Caco-2 (cell line): ENCODE measurements at regions of chr2 and their contacts with region 1.

Region 1: GRCh38 chr2:128232965-128233789 is 85.5 kb downstream of the HS6ST1 start:
- DNase-seq: peak; percentile 88 to 93
- H3K4me3 ChIP-seq: peak overlapping the region; percentile 71
- H3K4me3 Mint-ChIP-seq: peak overlapping the region; percentile 73
- H3K27ac Mint-ChIP-seq: no peak overlapping the region
- H3K4me1 ChIP-seq: no peaks in the 10 kb centered on the region
- H3K4me1 Mint-ChIP-seq: no peaks in the 10 kb centered on the region
- H3K27me3 ChIP-seq: no peaks in the 10 kb centered on the region
- H3K27me3 Mint-ChIP-seq: no peaks in the 10 kb centered on the region
- CTCF ChIP-seq: peak; percentile 88 to 96

Region 2: GRCh38 chr2:127763776-127764175 is 469.4 kb before region 1 on chr2:
- CTCF ChIA-PET with region 1: no interaction called
- POLR2A ChIA-PET with region 1: no interaction called
- intact Hi-C with region 1: no loop called
- DNase-seq: no peak
- H3K4me3 ChIP-seq: no peak overlapping the region
- H3K4me3 Mint-ChIP-seq: no peak overlapping the region
- H3K27ac Mint-ChIP-seq: no peak overlapping the region
- H3K4me1 ChIP-seq: no peaks in the 10 kb centered on the region
- H3K4me1 Mint-ChIP-seq: no peaks in the 10 kb centered on the region
- H3K27me3 ChIP-seq: no peaks in the 10 kb centered on the region
- H3K27me3 Mint-ChIP-seq: no peaks in the 10 kb centered on the region
- CTCF ChIP-seq: no peak

Region 3: GRCh38 chr2:128062571-128062970 is 170.6 kb before region 1 on chr2:
- CTCF ChIA-PET with region 1: interaction called, 5 read pairs
- POLR2A ChIA-PET with region 1: no interaction called
- intact Hi-C with region 1: loop called (anchors 1 kb)
- DNase-seq: no peak
- H3K4me3 ChIP-seq: no peak overlapping the region
- H3K4me3 Mint-ChIP-seq: no peak overlapping the region
- H3K27ac Mint-ChIP-seq: no peak overlapping the region
- H3K4me1 ChIP-seq: peaks cover 4% of the 10 kb centered on the region
- H3K4me1 Mint-ChIP-seq: peaks cover 9% of the 10 kb centered on the region
- H3K27me3 ChIP-seq: no peaks in the 10 kb centered on the region
- H3K27me3 Mint-ChIP-seq: no peaks in the 10 kb centered on the region
- CTCF ChIP-seq: no peak

Region 4: DNA sequence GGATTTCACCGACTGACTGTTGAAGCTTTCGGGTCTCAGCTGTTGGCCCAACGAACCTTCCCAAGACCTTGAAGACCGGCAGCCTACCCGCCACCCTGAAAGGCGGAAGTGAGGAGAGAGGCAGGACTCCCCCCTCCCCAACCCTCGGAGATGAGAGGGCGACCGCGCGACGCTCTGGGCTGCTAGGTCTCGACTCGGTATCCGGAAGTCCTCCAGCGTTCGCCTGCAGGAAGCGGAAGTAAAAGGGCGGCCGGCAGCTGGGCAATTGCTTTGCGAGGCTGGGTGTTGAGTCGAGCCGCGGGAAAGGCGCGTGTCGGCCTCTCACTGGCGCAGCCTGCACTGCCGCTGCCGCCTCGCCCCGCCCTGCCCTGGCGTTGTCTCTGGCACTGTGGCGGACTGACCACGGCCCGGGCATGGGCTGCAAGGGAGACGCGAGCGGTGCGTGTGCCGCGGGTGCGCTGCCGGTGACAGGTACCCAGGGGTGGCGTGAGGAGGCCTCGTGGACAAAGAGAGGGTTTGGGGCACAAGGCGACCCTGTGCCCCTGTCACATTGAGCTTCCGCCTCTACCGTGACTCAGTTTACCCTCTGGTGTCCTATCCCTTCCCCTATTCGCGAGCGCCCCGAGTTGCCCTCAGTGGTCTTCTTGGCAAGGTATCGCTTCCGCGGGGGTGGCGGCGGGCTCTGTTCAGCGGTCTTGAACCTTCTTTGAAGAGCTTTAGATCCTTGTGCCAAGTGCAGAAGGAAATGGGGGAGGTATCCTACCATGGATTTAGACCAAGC is 142.0 kb before region 1 on chr2 and contains the start of gene UGGT1:
- CTCF ChIA-PET with region 1: interaction called, 4 read pairs
- POLR2A ChIA-PET with region 1: no interaction called
- intact Hi-C with region 1: loop called (anchors 10 kb)
- DNase-seq: peak; percentile 96 to 97
- H3K4me3 ChIP-seq: peak within 1 kb of the TSS; percentile 64
- H3K4me3 Mint-ChIP-seq: peak within 1 kb of the TSS; percentile 84
- H3K27ac Mint-ChIP-seq: peak within 1 kb of the TSS; percentile 91
- H3K4me1 ChIP-seq: no peaks in the 10 kb centered on the region
- H3K4me1 Mint-ChIP-seq: no peaks in the 10 kb centered on the region
- H3K27me3 ChIP-seq: no peaks in the 10 kb centered on the region
- H3K27me3 Mint-ChIP-seq: no peaks in the 10 kb centered on the region
- CTCF ChIP-seq: no peak
- total RNA-seq, gene UGGT1: 77.5 and 80.0 TPM in 2 replicates

Region 5: DNA sequence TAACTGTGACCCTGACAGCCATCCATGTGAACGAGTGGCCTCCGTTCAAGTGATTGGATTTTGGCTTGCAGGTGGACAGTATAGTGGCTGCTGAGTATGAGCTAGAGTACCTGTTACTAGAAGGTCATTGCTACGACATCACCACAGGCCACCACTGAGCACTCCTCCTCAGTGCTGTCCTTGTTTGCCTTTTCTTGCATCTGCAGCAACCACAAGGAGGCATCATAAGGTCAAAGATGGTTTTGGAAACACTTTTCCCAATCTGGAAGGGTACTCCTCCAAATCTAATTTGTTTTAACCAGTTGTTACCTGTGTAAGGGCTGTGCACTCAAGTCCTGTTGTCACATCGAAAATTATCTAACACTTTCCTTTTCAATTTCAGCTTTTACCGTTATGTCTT is 61.0 kb before region 1 on chr2:
- CTCF ChIA-PET with region 1: no interaction called
- POLR2A ChIA-PET with region 1: interaction called, 8 read pairs
- intact Hi-C with region 1: loop called (anchors 1 kb)
- DNase-seq: peak in 1 of 2 experiments; percentile 20
- H3K4me3 ChIP-seq: no peak overlapping the region
- H3K4me3 Mint-ChIP-seq: no peak overlapping the region
- H3K27ac Mint-ChIP-seq: no peak overlapping the region
- H3K4me1 ChIP-seq: peaks cover 16% of the 10 kb centered on the region
- H3K4me1 Mint-ChIP-seq: peaks cover 14% of the 10 kb centered on the region
- H3K27me3 ChIP-seq: no peaks in the 10 kb centered on the region
- H3K27me3 Mint-ChIP-seq: no peaks in the 10 kb centered on the region
- CTCF ChIP-seq: peak; percentile 24 to 47

Region 6: GRCh38 chr2:128178650-128179460 is 54.3 kb before region 1 on chr2:
- CTCF ChIA-PET with region 1: interaction called, 7 read pairs
- POLR2A ChIA-PET with region 1: no interaction called
- intact Hi-C with region 1: loop called (anchors 1 kb)
- DNase-seq: peak; percentile 46 to 60
- H3K4me3 ChIP-seq: no peak overlapping the region
- H3K4me3 Mint-ChIP-seq: no peak overlapping the region
- H3K27ac Mint-ChIP-seq: no peak overlapping the region
- H3K4me1 ChIP-seq: no peaks in the 10 kb centered on the region
- H3K4me1 Mint-ChIP-seq: no peaks in the 10 kb centered on the region
- H3K27me3 ChIP-seq: no peaks in the 10 kb centered on the region
- H3K27me3 Mint-ChIP-seq: no peaks in the 10 kb centered on the region
- CTCF ChIP-seq: peak; percentile 65 to 76